ENCODE measurements at regions of chr15 and their contacts with region 1.

Region 1: GRCh38 chr15:73908030-73908821 is 18.0 kb upstream of the LOXL1 start:
- DNase-seq: peak; percentile 79
- CTCF ChIP-seq: peak; percentile 98

Region 2: GRCh38 chr15:73832657-73833056 is 75.6 kb before region 1 on chr15:
- CTCF ChIA-PET with region 1: no interaction called
- POLR2A ChIA-PET with region 1: no interaction called
- DNase-seq: no peak
- CTCF ChIP-seq: no peak

Region 3: GRCh38 chr15:73891328-73892315 is 16.6 kb before region 1 on chr15:
- CTCF ChIA-PET with region 1: interaction called, 50 read pairs
- POLR2A ChIA-PET with region 1: no interaction called
- DNase-seq: no peak
- CTCF ChIP-seq: no peak

Region 4: GRCh38 chr15:73897441-73898261 is 10.6 kb before region 1 on chr15:
- CTCF ChIA-PET with region 1: interaction called, 50 read pairs
- POLR2A ChIA-PET with region 1: no interaction called
- DNase-seq: peak; percentile 82
- CTCF ChIP-seq: peak; percentile 76

Region 5: DNA sequence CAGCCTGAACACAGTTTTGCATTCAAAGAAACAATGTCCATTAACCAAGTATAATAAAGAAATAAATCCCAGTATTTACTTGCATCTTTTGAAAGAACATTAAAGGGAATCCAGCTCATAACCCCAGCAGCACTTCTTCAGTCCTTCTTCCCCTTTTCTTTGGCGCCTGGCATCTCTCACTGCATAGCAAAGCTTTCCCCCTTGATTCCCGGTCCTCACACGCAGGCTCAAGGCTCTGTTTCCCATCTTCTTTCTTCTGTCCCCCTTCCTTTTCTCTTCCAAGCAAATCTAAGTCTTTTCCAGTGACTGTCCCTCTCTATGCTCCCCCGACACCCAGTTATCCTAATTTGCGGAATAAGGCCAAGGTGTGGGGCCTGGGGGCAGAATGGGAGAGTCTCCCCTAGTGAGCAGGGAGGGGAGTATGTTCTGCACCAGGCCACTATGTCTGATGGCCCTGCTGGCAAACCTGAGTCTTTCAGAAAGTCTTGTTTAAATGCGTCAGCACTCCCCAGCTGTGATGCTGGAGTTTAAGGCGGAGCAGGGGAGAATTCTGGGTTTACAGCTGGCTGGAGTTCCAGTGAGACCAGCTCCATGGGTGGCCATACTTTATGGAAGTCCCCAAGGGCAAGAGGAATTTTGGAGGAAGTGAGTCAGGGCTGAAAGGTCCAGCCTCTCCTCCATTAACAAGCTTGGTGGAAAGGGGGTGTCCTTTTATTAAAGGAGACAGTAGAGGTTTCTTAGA is 132.1 kb after region 1 on chr15:
- CTCF ChIA-PET with region 1: no interaction called
- POLR2A ChIA-PET with region 1: no interaction called
- DNase-seq: no peak
- CTCF ChIP-seq: no peak

Measured in GM10248 (cell line).